CD8-positive, alpha-beta T cell (primary cell): ENCODE measurements at regions of chr13 and their contacts with region 1.

Region 1: GRCh38 chr13:72792640-72793039 is 10.7 kb downstream of the PIBF1 start:
- DNase-seq: no peak
- ATAC-seq: no peak
- H3K4me3 ChIP-seq: no peak overlapping the region
- H3K4me3 Mint-ChIP-seq: no peak overlapping the region
- H3K27ac ChIP-seq: no peak overlapping the region
- H3K27ac Mint-ChIP-seq: no peak overlapping the region
- H3K4me1 ChIP-seq: no peaks in the 10 kb centered on the region
- H3K4me1 Mint-ChIP-seq: peaks cover 21% of the 10 kb centered on the region
- H3K27me3 ChIP-seq: no peaks in the 10 kb centered on the region
- H3K27me3 Mint-ChIP-seq: no peaks in the 10 kb centered on the region
- CTCF ChIP-seq: no peak

Region 2: DNA sequence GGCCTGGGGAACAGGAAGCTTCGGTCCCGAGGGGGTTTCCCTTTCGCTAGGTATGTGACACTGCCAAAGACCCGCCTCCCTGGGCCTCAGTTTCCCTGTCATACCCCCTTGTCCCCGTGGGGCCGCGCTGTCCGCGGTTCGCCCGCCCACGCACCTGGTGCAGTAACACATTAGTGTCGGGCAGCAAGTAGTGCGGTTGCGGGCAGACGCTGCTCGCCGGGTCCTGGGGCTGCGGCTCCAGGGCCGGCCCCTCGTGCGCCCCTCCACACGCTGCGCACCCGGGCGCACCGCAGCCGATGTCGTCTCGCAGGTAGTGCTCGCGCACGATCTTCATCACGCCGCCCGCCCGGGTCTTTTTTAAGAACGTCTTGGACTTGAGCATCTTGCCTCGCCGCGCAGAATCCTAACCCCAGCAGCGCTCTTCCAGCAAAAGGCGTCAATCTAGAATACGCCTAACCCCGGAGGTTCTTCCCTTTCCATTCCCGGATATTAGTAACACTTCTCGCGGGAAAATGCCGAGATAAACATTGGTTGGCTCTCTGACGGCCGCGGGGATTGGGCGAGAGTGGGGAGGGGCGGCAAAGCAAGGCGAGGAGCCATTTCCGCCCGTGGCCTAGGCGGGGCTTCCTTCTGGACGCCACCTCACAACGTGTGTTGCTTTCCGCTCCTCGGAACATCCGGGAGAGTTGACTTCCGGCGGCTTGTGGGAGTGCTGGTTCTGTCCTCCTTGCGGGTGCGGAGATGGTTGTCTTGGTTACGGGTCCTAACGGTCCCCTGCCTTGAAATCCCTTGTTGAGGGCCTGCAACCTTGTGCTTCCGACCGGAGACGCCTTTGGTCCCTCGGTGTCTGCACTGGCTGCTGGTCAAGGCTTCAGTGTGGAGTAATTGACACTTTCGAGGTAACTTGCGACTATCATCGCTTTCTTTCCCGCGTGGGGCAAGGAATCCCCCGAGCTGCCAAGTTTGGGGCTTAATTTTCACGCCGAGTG is 10.9 kb before region 1 on chr13 and contains the starts of genes DIS3 and PIBF1:
- CTCF ChIA-PET with region 1: no interaction called
- POLR2A ChIA-PET with region 1: interaction called, 3 read pairs
- intact Hi-C with region 1: loop called in 1 of 2 experiments (anchors 2 kb)
- DNase-seq: peak; percentile 88 to 98 (median 93)
- ATAC-seq: peak; percentile 96
- H3K4me3 ChIP-seq: peak within 1 kb of the TSS; percentile 83 to 96
- H3K4me3 Mint-ChIP-seq: peak within 1 kb of the TSS; percentile 97
- H3K27ac ChIP-seq: peak within 1 kb of the TSS; percentile 88 to 91
- H3K27ac Mint-ChIP-seq: peak within 1 kb of the TSS; percentile 97
- H3K4me1 ChIP-seq: peaks cover 48% of the 10 kb centered on the region
- H3K4me1 Mint-ChIP-seq: peaks cover 70% of the 10 kb centered on the region
- H3K27me3 ChIP-seq: no peaks in the 10 kb centered on the region
- H3K27me3 Mint-ChIP-seq: no peaks in the 10 kb centered on the region
- CTCF ChIP-seq: no peak
- total RNA-seq, gene DIS3: 60.8 to 64.5 TPM
- total RNA-seq, gene PIBF1: 13.1 to 14.3 TPM